CD4-positive, alpha-beta T cell (primary cell): ENCODE measurements at regions of chr19 and their contacts with region 1.

Region 1: GRCh38 chr19:17215125-17215971 is at the start of gene USE1:
- DNase-seq: peak; percentile 80 to 95 (median 85)
- ATAC-seq: peak; percentile 98
- H3K4me3 ChIP-seq: peak within 1 kb of the TSS; percentile 93
- H3K4me3 Mint-ChIP-seq: peak within 1 kb of the TSS; percentile 88
- H3K27ac ChIP-seq: peak within 1 kb of the TSS; percentile 74 to 97
- H3K27ac Mint-ChIP-seq: peak within 1 kb of the TSS; percentile 94
- H3K4me1 ChIP-seq: peaks cover 22% of the 10 kb centered on the region
- H3K4me1 Mint-ChIP-seq: peaks cover 11% of the 10 kb centered on the region
- H3K27me3 ChIP-seq: no peaks in the 10 kb centered on the region
- H3K27me3 Mint-ChIP-seq: no peaks in the 10 kb centered on the region
- CTCF ChIP-seq: no peak
- total RNA-seq, gene USE1: 23.1 to 24.3 TPM

Region 2: GRCh38 chr19:17075035-17075863 is 140.1 kb before region 1 on chr19 and contains the starts of genes HAUS8 and MYO9B:
- CTCF ChIA-PET with region 1: no interaction called
- POLR2A ChIA-PET with region 1: interaction called, 22 read pairs
- intact Hi-C with region 1: loop called in 1 of 2 experiments (anchors 1 kb)
- DNase-seq: peak; percentile 98 to 100 (median 99)
- ATAC-seq: peak; percentile 92
- H3K4me3 ChIP-seq: peak within 1 kb of the TSS; percentile 92
- H3K4me3 Mint-ChIP-seq: peak within 1 kb of the TSS; percentile 100
- H3K27ac ChIP-seq: peak within 1 kb of the TSS; percentile 80
- H3K27ac Mint-ChIP-seq: peak within 1 kb of the TSS; percentile 92
- H3K4me1 ChIP-seq: peaks cover 59% of the 10 kb centered on the region
- H3K4me1 Mint-ChIP-seq: peaks cover 68% of the 10 kb centered on the region
- H3K27me3 ChIP-seq: no peaks in the 10 kb centered on the region
- H3K27me3 Mint-ChIP-seq: no peaks in the 10 kb centered on the region
- CTCF ChIP-seq: no peak
- total RNA-seq, gene HAUS8: 20.6 to 20.7 TPM
- total RNA-seq, gene MYO9B: 176 to 184 TPM

Region 3: GRCh38 chr19:17183858-17184321 is 31.5 kb before region 1 on chr19:
- CTCF ChIA-PET with region 1: no interaction called
- POLR2A ChIA-PET with region 1: interaction called, 36 read pairs
- intact Hi-C with region 1: no loop called
- DNase-seq: peak in 6 of 14 experiments; percentile 7 to 63 (median 46)
- ATAC-seq: peak; percentile 57
- H3K4me3 ChIP-seq: peak overlapping the region; percentile 41
- H3K4me3 Mint-ChIP-seq: peak overlapping the region; percentile 83
- H3K27ac ChIP-seq: peak overlapping the region; percentile 46 to 82
- H3K27ac Mint-ChIP-seq: peak overlapping the region; percentile 89
- H3K4me1 ChIP-seq: peaks cover 35% of the 10 kb centered on the region
- H3K4me1 Mint-ChIP-seq: peaks cover 19% of the 10 kb centered on the region
- H3K27me3 ChIP-seq: no peaks in the 10 kb centered on the region
- H3K27me3 Mint-ChIP-seq: no peaks in the 10 kb centered on the region
- CTCF ChIP-seq: no peak

Region 4: DNA sequence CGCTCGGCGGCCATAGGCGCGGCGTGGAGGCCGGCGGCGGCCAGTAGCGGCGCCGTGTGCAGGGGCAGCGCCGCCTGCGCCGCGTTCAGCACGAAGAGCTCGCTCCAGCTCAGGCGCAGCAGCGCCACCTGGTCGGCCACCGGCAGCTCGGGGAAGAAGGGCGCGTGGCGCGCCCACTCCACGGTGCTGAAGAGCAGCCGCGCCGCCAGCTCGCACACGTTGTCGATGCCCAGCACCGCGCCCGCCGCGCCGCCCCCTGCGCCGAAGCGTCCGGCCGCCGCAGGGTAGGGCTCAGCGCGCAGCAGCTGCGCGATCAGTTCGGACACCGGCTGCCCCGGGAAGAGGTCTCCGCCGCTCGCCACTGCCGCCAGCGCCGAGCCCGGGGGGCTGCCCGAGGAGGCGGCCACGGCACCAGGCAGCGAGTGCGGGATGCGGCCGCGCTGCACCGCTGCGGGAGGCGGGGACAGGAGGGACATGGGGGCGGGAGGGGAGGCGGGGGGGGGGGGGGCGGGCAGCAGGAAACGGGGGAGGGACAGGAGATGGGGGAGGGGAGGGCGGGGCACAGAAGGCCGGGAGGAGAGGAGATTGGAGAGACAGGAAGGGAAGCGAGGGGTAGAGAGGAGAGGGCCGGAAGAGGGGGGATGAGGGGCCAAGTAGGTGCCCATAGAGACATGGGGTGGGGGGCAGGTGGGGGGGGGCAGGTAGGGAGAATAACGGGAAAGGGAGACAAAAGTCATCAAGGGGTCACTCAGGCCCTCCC is 20.4 kb after region 1 on chr19:
- CTCF ChIA-PET with region 1: interaction called, 12 read pairs
- POLR2A ChIA-PET with region 1: interaction called, 40 read pairs
- intact Hi-C with region 1: loop called (anchors 1 to 2 kb)
- DNase-seq: peak; percentile 57 to 92 (median 73)
- ATAC-seq: peak; percentile 92
- H3K4me3 ChIP-seq: peak overlapping the region; percentile 87
- H3K4me3 Mint-ChIP-seq: peak overlapping the region; percentile 87
- H3K27ac ChIP-seq: no peak overlapping the region
- H3K27ac Mint-ChIP-seq: no peak overlapping the region
- H3K4me1 ChIP-seq: peaks cover 22% of the 10 kb centered on the region
- H3K4me1 Mint-ChIP-seq: peaks cover 6% of the 10 kb centered on the region
- H3K27me3 ChIP-seq: no peaks in the 10 kb centered on the region
- H3K27me3 Mint-ChIP-seq: no peaks in the 10 kb centered on the region
- CTCF ChIP-seq: peak; percentile 67

Region 5: DNA sequence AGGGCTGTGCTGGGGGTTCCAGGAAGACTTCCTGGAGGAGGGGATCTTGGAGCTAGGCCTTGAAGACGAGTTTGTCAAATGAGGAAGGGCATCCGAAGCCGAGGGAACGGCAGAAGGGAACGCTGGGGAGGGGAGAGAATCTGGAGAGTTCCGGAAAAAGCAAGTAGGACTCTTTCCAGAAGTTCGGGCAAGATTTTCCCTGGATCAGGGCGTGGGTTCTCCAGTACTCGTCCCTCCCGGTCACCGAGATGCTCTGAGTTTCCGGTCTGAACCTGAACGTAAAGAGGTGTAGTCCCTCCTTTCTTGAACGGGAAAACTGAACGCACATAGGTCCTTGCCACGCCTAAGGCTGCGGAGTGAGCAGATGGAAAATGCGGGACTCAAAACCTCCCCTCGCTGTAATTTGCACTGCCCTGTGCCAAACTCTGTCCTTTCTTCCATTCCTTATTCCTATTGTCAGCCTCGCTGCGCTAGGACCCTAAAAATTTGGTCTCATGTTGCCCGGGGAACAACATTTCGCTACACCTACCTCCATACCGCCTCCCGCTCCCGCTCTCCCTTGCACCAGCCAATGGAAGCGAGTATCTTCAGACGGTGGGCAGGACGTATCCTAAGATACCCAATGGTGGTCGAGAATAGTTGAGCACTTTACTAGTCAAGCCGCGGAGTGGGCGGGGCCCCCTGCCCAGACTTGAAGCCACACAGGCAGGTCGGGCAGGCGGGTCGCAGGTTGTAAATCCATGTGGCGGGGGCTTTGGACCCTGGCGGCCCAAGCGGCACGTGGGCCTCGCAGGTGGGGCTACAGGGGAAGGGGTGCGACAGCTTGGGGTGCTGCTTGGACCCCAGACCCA is 121.7 kb after region 1 on chr19 and contains the start of gene GTPBP3:
- CTCF ChIA-PET with region 1: no interaction called
- POLR2A ChIA-PET with region 1: interaction called, 15 read pairs
- intact Hi-C with region 1: loop called in 1 of 2 experiments (anchors 1 kb)
- DNase-seq: peak; percentile 92 to 98 (median 95)
- ATAC-seq: peak; percentile 89
- H3K4me3 ChIP-seq: peak within 1 kb of the TSS; percentile 71
- H3K4me3 Mint-ChIP-seq: peak within 1 kb of the TSS; percentile 93
- H3K27ac ChIP-seq: peak within 1 kb of the TSS; percentile 73 to 79
- H3K27ac Mint-ChIP-seq: peak within 1 kb of the TSS; percentile 86
- H3K4me1 ChIP-seq: peaks cover 54% of the 10 kb centered on the region
- H3K4me1 Mint-ChIP-seq: peaks cover 36% of the 10 kb centered on the region
- H3K27me3 ChIP-seq: no peaks in the 10 kb centered on the region
- H3K27me3 Mint-ChIP-seq: no peaks in the 10 kb centered on the region
- CTCF ChIP-seq: no peak
- total RNA-seq, gene GTPBP3: 21.2 to 24.0 TPM